Right ventricle myocardium inferior (tissue), 1 donor: ENCODE measurements at regions of chr2 and their contacts with region 1.

Region 1: GRCh38 chr2:144516981-144517865 is 2.7 kb downstream of the ZEB2 start:
- DNase-seq: peak; percentile 83
- ATAC-seq: peak; percentile 40

Region 2: GRCh38 chr2:143433251-143433650 is 1084.0 kb before region 1 on chr2:
- intact Hi-C with region 1: loop called (anchors 10 kb)
- DNase-seq: no peak
- ATAC-seq: peak; percentile 71

Region 3: DNA sequence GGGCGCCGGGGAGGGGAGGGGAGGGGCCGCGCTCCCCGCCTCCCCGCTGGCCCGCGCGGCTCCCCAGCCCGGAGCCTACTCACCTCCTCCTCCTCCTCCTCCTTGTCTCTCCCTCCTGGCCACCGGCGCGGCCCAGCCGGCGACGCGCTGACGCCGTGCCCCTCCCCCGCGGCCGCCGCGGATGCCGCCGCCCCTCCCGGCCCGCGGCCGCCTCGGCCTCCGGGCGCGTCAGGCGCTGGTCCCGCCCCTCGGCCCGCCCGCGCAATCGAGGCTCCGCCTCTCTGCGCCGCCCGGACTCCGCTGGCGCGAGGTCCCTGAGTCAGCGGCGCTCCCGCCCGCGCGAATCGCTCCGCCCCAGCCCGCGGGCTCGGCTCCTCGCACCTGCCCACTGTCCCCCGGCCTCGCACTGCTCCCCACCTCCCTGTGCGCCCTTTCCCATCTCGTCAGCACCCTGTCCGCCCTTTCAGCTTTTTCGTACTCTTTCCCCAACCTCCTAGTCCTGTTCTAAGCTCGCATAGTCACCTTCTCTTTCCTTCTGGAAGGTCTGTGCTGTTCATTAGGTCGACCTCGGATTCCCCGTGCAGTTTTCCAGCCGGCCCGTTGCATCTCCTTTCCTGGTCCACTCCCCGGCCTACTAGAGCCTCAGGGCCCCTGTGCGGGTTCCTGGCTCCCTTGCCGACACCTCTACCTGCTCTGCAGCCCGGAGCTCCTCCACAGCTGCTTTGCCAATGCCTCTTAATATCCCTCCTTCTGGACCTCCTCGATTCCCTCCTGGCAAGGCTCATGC is 184.7 kb before region 1 on chr2:
- intact Hi-C with region 1: loop called (anchors 2 kb)
- DNase-seq: peak; percentile 93
- ATAC-seq: peak; percentile 96

Region 4: DNA sequence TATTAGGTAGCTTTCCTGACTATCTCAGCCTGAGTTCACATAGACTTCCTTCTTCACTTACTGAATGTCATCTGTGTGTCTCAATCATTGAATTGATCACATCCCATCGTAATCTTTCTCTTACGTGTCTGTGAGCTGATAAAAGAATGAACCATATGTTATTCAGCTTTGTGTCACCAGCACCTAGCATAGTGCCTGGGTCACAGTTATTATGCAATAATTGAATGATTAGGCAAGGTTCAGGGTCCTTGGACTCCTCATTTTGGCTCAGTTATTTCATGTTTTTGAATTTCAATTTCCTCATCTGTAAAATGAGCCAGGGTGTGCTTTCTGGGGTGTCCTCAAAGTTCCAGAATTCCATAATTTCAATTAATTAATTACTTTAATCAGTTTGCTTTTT is 104.5 kb before region 1 on chr2:
- intact Hi-C with region 1: no loop called
- DNase-seq: no peak
- ATAC-seq: peak; percentile 56

Region 5: GRCh38 chr2:144703852-144704708 is 186.9 kb after region 1 on chr2:
- intact Hi-C with region 1: loop called (anchors 10 kb)
- DNase-seq: peak; percentile 60
- ATAC-seq: peak; percentile 71

Region 6: DNA sequence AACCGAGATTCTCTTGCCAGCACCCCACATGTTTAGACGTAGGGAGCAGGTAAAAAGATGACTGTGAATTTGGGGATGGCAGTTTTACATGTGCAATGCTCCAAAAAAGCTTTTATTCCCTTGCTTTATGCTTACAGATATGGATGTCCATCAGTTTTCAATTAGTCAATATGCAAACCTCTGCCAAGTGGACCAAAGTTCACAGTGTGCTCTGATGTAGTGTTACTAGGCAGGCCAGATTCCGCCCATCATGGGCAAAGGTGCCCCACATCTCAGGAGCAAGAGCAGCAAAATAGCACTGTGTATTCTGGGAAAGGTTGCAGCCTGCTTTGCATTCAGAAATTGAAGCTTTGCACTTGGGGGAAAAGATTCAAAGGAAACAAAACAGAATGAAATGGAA is 332.4 kb after region 1 on chr2:
- intact Hi-C with region 1: no loop called
- DNase-seq: peak; percentile 53
- ATAC-seq: no peak

Region 7: GRCh38 chr2:145007093-145007959 is 490.1 kb after region 1 on chr2:
- intact Hi-C with region 1: loop called (anchors 5 kb)
- DNase-seq: peak; percentile 72
- ATAC-seq: peak; percentile 64

Region 8: GRCh38 chr2:145919477-145919876 is 1402.3 kb after region 1 on chr2:
- intact Hi-C with region 1: loop called (anchors 10 kb)
- DNase-seq: no peak
- ATAC-seq: no peak